ENCODE measurements at regions of chr2 and their contacts with region 1.

Region 1: DNA sequence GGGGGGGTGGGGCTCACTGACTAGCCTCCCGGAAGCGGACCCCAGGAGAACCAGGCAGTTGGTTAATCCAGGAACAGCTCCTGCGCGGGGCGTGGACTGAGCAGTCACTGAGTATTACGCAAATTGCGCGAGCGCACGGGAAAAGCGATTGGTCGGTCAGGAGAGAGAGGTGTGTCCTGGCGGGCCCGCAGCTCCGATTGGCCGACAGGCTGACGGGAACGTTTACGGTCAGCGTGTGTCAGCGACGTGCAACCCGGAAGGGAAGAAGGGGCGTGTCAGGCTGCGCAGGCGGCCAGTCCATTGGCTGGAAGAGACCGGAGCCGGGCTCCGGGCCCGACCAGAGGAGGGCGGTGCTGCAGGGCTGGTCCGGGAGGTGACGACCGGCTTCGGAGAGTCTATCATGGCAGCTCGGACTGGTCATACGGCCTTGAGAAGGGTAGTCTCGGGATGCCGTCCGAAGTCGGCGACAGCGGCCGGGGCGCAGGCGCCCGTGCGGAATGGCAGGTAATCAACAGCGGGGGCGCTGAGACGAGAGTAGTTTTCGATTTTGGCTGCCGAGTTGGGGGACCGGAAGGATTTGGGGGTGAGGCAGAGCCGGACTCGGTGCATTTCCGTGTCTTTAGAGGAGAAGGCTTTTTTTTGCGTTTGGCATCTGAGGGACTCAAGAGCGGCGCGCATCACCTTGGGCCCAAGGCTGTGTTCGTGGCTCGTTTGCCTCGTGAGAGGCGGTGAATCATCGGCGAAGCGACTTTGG is at the start of gene COQ10B:
- DNase-seq: peak; percentile 99
- H3K4me3 ChIP-seq: peak within 1 kb of the TSS; percentile 91
- H3K27ac ChIP-seq: peak within 1 kb of the TSS; percentile 96 to 99
- H3K4me1 ChIP-seq: peaks cover 3% of the 10 kb centered on the region
- H3K27me3 ChIP-seq: no peaks in the 10 kb centered on the region
- CTCF ChIP-seq: peak; percentile 15 to 46 (median 42)
- EP300 ChIP-seq: peak; percentile 82
- POLR2A ChIP-seq: peak; percentile 95
- total RNA-seq, gene COQ10B: 16.4 to 23.1 (median 18.4) TPM

Region 2: GRCh38 chr2:197499594-197500526 is 46.5 kb after region 1 on chr2 and contains the starts of genes HSPD1 and HSPE1:
- intact Hi-C with region 1: loop called in 2 of 4 experiments (anchors 5 kb)
- DNase-seq: peak; percentile 98
- H3K4me3 ChIP-seq: peak within 1 kb of the TSS; percentile 95
- H3K27ac ChIP-seq: peak within 1 kb of the TSS; percentile 96 to 97
- H3K4me1 ChIP-seq: peaks cover 4% of the 10 kb centered on the region
- H3K27me3 ChIP-seq: no peaks in the 10 kb centered on the region
- CTCF ChIP-seq: peak in 2 of 3 donors; percentile 10 to 37
- EP300 ChIP-seq: peak; percentile 84
- POLR2A ChIP-seq: peak; percentile 92
- total RNA-seq, gene HSPD1: 146 to 289 (median 192) TPM
- total RNA-seq, gene HSPE1: 57.8 to 110 (median 69.5) TPM

Region 3: GRCh38 chr2:197591339-197592072 is 138.2 kb after region 1 on chr2:
- intact Hi-C with region 1: no loop called
- DNase-seq: no peak
- H3K4me3 ChIP-seq: no peak overlapping the region
- H3K27ac ChIP-seq: no peak overlapping the region
- H3K4me1 ChIP-seq: no peaks in the 10 kb centered on the region
- H3K27me3 ChIP-seq: no peaks in the 10 kb centered on the region
- CTCF ChIP-seq: no peak
- EP300 ChIP-seq: no peak
- POLR2A ChIP-seq: no peak